WTC11 (cell line): ENCODE measurements at regions of chr12 and their contacts with region 1.

Region 1: GRCh38 chr12:91382081-91382543 is 199.5 kb upstream of the DCN start:
- DNase-seq: peak; percentile 91
- ATAC-seq: peak; percentile 74
- H3K4me3 Mint-ChIP-seq: peak overlapping the region; percentile 83
- H3K27ac Mint-ChIP-seq: peak overlapping the region; percentile 100
- H3K4me1 Mint-ChIP-seq: peaks cover 39% of the 10 kb centered on the region
- H3K27me3 Mint-ChIP-seq: no peaks in the 10 kb centered on the region
- CTCF ChIP-seq: peak; percentile 85

Region 2: DNA sequence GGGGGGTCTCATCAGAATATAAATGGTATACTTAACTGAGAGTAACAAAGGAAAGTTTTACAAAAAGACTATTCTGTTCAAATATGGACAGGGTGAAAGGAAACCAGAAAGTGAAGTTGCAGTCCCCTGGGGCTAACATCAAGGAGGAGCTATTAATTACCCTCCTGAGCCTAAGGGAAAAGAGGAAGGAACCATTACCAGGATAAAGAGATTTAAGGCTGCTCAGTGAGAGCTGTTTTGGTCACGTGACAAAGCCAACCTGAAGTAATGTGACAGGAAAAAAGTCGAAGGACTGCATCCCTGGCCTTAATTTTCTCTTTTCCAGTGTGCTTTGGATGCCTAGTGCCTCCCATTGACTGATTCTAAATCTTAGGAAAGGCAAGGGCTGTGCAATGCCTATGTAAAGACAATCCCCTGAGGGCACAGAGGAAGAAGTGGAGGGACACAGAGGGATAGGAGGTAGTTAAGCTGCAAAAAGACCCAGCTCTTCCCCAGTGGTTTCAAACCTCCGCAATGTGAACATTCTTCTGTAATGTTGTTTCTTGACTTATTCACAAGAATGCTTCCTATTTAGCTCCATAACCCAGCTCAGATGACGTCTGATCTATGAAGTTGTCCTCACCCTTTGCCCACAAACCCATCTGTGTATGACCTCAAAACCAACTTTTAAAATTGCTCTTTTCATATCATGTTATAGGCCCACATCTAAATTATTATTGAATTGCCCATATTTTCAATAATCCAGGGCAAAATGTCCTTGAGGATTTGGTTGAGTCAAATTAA is 11.8 kb before region 1 on chr12:
- CTCF ChIA-PET with region 1: interaction called, 21 read pairs
- POLR2A ChIA-PET with region 1: no interaction called
- DNase-seq: no peak
- ATAC-seq: peak; percentile 90
- H3K4me3 Mint-ChIP-seq: no peak overlapping the region
- H3K27ac Mint-ChIP-seq: peak overlapping the region; percentile 71
- H3K4me1 Mint-ChIP-seq: peaks cover 47% of the 10 kb centered on the region
- H3K27me3 Mint-ChIP-seq: no peaks in the 10 kb centered on the region
- CTCF ChIP-seq: no peak

Region 3: GRCh38 chr12:91413581-91414546 is 31.8 kb after region 1 on chr12:
- CTCF ChIA-PET with region 1: interaction called, 13 read pairs
- POLR2A ChIA-PET with region 1: no interaction called
- DNase-seq: no peak
- ATAC-seq: peak; percentile 50
- H3K4me3 Mint-ChIP-seq: no peak overlapping the region
- H3K27ac Mint-ChIP-seq: peak overlapping the region; percentile 65; the same call in 1 of the 2 replicates
- H3K4me1 Mint-ChIP-seq: peaks cover 20% of the 10 kb centered on the region
- H3K27me3 Mint-ChIP-seq: no peaks in the 10 kb centered on the region; the same call in 1 of the 2 replicates
- CTCF ChIP-seq: no peak

Region 4: GRCh38 chr12:92145731-92146496 is 763.8 kb after region 1 on chr12 and contains the start of gene BTG1:
- CTCF ChIA-PET with region 1: interaction called, 50 read pairs
- POLR2A ChIA-PET with region 1: interaction called, 29 read pairs
- DNase-seq: peak; percentile 98
- ATAC-seq: peak; percentile 89
- H3K4me3 Mint-ChIP-seq: peak within 1 kb of the TSS; percentile 99
- H3K27ac Mint-ChIP-seq: peak within 1 kb of the TSS; percentile 100
- H3K4me1 Mint-ChIP-seq: peaks cover 56% of the 10 kb centered on the region
- H3K27me3 Mint-ChIP-seq: no peaks in the 10 kb centered on the region
- CTCF ChIP-seq: no peak
- total RNA-seq, gene BTG1: 26.7 to 32.0 TPM (median 31.2 TPM) in 3 replicates

Region 5: GRCh38 chr12:92570056-92570753 is 1188.1 kb after region 1 on chr12:
- CTCF ChIA-PET with region 1: interaction called, 21 read pairs
- POLR2A ChIA-PET with region 1: no interaction called
- DNase-seq: peak; percentile 28
- ATAC-seq: peak; percentile 38; the same call in 1 of the 2 replicates
- H3K4me3 Mint-ChIP-seq: no peak overlapping the region
- H3K27ac Mint-ChIP-seq: no peak overlapping the region
- H3K4me1 Mint-ChIP-seq: peaks cover 8% of the 10 kb centered on the region
- H3K27me3 Mint-ChIP-seq: no peaks in the 10 kb centered on the region; the same call in 1 of the 2 replicates
- CTCF ChIP-seq: peak; percentile 67

Region 6: GRCh38 chr12:92649511-92650227 is 1267.6 kb after region 1 on chr12:
- CTCF ChIA-PET with region 1: interaction called, 19 read pairs
- POLR2A ChIA-PET with region 1: interaction called, 4 read pairs
- DNase-seq: peak; percentile 50
- ATAC-seq: peak; percentile 98
- H3K4me3 Mint-ChIP-seq: no peak overlapping the region
- H3K27ac Mint-ChIP-seq: peak overlapping the region; percentile 36; the same call in 1 of the 2 replicates
- H3K4me1 Mint-ChIP-seq: peaks cover 31% of the 10 kb centered on the region
- H3K27me3 Mint-ChIP-seq: no peaks in the 10 kb centered on the region
- CTCF ChIP-seq: peak; percentile 36; the same call in 1 of the 2 replicates